Tibial artery (tissue), 4 donors: ENCODE measurements at regions of chr1 and their contacts with region 1.

Region 1: DNA sequence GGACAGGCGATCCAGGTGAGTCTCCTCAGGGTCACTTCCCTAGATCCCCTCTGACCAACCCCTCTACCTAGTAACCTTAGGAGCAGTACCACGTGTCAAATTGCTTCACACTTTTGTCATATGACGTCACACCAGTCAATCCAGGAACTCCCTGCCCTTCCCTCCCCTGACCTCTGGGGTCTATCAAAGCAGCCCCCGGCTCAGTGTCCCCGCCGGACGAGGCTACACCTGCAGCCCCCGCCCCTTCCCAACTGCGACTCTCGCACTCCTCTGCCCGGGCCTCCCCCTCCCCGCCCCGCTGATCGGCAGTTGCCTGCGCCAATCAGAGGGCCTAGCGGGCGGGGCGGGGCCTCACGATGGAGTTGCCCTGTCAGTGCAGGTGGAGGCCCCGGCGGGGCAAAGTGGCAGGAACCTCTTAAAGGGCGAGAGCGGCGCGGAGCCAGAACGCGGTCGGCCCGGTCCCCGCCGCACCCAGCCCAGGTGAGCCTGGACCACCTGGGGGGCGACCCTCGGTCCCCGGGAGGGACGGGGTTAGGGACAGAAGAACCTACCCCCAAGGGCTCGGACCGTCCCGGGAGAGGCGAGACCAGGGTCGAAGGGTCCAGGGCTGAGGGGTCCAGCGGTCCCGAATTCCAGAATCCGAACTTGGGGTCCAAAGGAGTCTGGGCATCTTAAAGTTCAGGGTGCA is 27.5 kb upstream of the EPB41 start:
- DNase-seq: peak; percentile 75 to 92
- H3K4me3 ChIP-seq: peak overlapping the region; percentile 91 to 100
- H3K27ac ChIP-seq: peak overlapping the region; percentile 71 to 75
- H3K4me1 ChIP-seq: peaks cover 0 to 40% (median 28%) of the 10 kb centered on the region in 4 donors
- H3K27me3 ChIP-seq: no peaks in the 10 kb centered on the region
- CTCF ChIP-seq: peak in 1 of 2 experiments; percentile 26

Region 2: DNA sequence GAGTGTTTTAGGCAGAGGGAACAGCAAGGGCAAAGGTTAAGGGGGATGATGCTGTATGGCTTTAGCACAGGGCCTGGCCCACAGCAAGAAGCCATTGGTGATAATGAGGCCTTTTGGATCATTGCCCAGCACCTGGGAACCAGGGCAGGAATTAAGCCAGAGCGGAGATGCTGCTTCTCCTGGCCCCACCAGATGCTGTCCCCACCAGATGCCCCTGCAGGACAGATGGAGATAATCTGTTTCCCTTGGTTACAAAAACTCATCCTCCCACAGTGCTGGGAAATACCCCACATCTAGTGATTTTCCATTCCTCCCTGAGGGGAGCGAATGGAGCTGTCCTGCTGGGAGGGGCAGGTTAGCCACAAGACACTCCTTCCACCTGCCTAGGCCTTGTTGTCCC is 56.1 kb before region 1 on chr1:
- intact Hi-C with region 1: no loop called
- DNase-seq: no peak
- H3K4me3 ChIP-seq: no peak overlapping the region
- H3K27ac ChIP-seq: no peak overlapping the region
- H3K4me1 ChIP-seq: no peaks in the 10 kb centered on the region
- H3K27me3 ChIP-seq: peaks cover 0 to 6% of the 10 kb centered on the region in 2 donors
- CTCF ChIP-seq: no peak

Region 3: GRCh38 chr1:29033829-29034466 is 147.1 kb after region 1 on chr1:
- intact Hi-C with region 1: loop called (anchors 1 kb)
- DNase-seq: no peak
- H3K4me3 ChIP-seq: no peak overlapping the region
- H3K27ac ChIP-seq: no peak overlapping the region
- H3K4me1 ChIP-seq: no peaks in the 10 kb centered on the region
- H3K27me3 ChIP-seq: no peaks in the 10 kb centered on the region
- CTCF ChIP-seq: peak; percentile 63 to 77

Region 4: DNA sequence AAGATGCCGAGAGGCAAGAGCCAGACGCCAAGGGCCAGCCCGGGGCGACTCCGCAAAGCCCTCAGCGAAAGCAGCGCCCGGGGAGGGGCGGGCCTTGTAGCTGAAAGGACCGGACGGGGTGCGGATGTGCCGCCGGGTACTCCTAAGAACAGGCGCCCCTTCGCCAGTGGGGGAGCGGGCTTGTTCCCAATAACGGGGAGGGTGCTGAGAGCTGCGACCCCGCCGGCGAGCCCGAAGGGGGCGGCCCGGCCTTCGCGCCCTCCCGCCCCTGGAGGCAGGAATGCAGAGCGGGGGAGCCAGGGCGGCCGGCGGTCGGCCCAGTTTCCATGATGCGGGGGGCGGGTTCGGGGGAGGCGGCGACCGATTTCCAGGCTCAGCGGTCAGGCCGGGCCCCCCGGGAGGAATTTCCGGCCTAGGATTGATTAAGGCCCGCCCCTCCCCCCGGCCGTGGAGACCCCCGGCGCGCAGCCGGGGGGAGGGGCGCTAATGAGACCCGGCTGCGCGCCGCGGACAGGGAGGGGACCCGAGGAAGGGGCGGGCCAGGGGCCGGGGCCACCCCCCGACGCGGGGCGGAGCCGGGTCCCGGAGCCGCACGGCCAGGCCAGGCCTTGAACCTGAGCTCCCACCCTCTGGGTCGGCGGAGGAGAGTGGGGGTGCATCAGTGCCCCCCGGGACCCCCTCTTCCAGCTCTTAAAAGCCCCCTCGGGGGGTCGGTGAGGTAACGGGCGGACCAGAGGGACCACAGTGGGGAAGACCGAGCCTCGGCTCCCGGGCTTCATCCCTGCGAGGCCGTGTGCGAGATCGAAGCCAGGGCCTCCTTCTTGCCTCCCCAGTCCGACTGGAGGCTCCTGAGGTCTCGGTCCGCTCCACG is 237.7 kb after region 1 on chr1:
- intact Hi-C with region 1: loop called (anchors 5 kb)
- DNase-seq: peak; percentile 74 to 91
- H3K4me3 ChIP-seq: peak overlapping the region; percentile 78 to 85
- H3K27ac ChIP-seq: peak overlapping the region; percentile 96 to 100
- H3K4me1 ChIP-seq: peaks cover 0 to 43% (median 27%) of the 10 kb centered on the region in 4 donors
- H3K27me3 ChIP-seq: no peaks in the 10 kb centered on the region
- CTCF ChIP-seq: peak; percentile 92 to 99

Region 5: DNA sequence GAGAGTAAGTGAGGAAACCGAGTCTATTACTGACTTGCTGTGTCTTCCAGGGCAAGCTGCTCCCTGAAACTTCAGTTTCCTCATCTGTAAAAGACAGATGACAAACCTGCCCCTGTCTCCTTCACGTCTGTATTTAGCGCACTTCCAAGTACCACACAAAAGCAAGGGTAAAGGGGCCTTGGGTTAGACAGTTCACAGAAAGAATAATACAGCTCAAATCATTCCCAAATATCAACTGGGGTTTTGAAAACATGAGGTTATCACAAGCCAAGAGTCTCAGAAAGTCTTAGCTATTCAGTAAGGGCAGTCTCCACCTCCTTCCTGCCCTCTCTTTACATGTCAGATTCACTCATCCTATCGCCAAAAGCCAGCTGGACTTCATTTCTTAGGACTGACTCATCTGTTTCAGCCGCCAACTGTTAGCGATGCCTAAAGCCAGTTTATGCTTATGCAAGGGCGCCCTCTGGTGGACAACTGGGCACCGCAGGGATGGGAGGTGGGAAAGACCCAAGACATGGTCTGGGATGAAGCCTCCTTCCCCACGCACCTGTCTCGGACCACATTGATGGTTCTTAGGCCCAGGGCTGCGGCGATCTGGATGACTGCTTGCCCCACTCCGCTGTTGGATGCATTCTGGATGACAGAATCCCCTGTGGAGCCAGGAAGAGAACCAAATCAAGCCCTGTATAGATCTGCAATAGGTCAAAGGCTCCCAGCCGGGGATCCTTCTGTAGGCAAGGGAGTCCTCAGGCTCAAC is 315.9 kb after region 1 on chr1:
- intact Hi-C with region 1: loop called (anchors 2 kb)
- DNase-seq: peak; percentile 95 to 97
- H3K4me3 ChIP-seq: no peak overlapping the region
- H3K27ac ChIP-seq: peak overlapping the region; percentile 72 to 76
- H3K4me1 ChIP-seq: peaks cover 0 to 11% (median 7%) of the 10 kb centered on the region in 4 donors
- H3K27me3 ChIP-seq: no peaks in the 10 kb centered on the region
- CTCF ChIP-seq: peak; percentile 90 to 98